ENCODE measurements at regions of chr1 and their contacts with region 1.

Region 1: GRCh38 chr1:29202584-29203340 is 21.1 kb upstream of the SRSF4 start:
- DNase-seq: peak; percentile 90 to 98
- ATAC-seq: peak; percentile 91

Region 2: DNA sequence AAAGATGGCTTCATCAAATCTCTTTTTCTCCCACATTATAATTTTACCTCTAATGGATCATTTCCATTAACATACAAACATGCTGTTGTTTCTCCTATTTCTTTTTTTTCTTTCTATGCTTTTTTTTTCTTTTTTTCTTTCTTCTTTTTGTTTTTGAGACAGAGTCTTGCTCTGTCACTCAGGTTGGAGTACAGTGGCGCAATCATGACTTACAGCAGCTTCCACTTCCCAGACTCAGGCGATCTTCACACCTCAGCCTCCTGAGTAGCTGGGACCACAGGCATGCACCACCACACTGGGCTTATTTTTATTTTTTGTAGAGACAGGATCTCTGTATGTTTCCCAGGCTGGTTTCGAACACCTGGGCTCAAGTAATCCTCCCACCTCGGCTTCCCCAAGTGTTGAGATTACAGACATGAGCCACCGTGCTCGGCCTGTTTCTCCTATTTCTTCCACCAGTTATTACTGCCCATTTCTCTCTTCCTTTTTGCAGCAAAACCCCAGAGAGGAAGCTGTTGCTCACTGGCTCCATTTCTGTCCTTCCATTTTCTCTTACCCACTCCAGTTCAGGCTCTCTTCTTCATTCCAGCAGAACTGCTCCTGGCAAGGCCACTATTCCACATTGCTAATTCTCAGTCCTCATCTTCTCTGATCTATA is 422.9 kb before region 1 on chr1:
- intact Hi-C with region 1: loop called in 1 of 2 experiments (anchors 10 kb)
- DNase-seq: no peak
- ATAC-seq: no peak

Region 3: GRCh38 chr1:28886731-28887418 is 315.9 kb before region 1 on chr1:
- intact Hi-C with region 1: loop called (anchors 2 to 10 kb)
- DNase-seq: peak; percentile 90 to 93
- ATAC-seq: peak; percentile 83

Region 4: DNA sequence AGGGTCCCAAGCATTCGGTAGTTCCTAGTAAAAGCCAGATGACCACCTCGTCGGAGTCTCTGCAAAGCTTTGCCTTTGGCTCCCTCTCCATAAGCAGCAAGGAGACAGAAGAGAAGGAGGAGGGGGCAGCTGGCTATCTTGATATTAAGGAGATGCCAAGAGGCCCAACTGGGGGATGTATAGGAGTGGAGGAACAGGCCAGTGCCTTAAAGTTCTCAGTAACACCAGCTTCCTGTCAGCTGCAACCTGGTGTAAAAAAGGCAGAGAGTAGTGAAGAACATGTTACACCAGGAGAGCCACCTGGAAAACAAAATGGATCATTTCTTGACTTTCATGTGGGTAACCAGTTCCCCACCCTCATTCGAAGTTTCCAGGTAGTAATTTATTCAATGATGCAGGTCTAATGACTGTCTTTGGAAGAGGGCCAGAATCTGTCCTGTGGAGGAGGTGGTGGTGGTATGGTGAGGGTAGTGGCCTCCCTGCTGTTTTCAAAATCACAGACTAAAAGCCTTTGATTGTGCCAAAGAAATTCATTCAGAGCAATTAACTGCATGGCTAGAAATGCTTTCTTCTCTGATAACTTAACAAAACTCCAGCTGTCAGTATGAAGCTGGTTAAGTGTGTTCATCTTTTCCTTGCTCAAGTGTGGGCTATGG is 106.4 kb before region 1 on chr1:
- intact Hi-C with region 1: no loop called
- DNase-seq: no peak
- ATAC-seq: no peak

Region 5: DNA sequence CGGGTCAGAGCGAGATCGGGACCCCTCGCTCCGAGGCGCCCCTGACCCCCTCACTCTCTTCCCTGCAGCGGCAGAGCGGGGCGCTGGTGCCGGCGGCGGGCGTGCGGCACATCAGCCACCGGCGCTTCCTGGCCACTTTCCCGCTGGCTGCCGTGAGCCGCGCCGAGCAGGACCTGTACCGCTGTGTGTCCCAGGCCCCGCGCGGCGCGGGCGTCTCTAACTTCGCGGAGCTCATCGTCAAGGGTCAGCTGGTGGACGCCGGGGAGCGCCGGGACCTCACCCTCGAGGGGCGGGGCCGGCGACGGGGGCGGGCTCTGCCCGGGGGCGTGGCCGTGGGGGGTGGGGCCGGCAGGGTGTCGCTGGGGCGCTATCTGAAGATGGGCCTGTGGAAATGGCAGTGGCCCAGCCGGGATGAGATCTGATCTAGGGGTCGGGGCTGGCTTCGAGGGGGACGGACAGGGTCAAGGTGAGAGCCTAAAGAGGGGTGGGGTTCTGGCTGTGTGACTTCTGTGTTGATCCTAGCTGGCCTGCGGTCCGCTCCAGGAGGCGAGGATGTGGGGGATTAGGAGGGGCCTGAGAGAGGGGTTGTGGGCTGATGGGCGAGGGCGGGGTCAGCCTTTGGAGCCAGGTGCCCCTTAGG is 57.2 kb after region 1 on chr1:
- intact Hi-C with region 1: no loop called
- DNase-seq: peak; percentile 55 to 64
- ATAC-seq: peak; percentile 78

Measured in left colon (tissue), 2 donors.